ENCODE measurements at regions of chr1 and their contacts with region 1.

Region 1: DNA sequence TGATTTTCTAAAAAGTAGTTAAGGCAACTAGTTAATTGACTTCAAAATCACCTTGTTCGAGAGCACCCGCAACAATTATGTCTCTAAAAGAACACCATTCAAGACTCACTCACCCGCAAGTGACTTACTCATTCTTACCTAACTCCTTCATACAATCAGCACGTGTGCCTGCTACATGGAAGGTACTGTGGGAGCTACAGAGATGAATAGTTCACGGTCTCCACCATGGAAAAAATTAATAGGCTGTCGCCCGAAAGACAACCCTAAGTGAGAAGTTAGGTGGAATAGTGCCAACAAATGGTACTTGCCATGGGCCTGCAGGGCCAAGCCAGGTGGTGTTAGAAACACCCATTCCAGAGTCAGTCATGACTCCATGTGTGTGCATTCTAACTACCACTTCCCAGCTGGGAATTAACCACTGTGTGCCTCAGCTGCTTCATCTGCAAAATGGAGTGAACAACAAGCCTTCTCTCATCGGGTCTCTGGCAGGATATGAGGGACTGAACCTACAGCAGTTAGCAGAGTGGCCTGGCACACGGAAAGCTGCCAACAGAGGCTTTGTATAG is 7.1 kb downstream of the SSBP3 start:
- DNase-seq: no peak
- H3K4me3 Mint-ChIP-seq: peak overlapping the region; percentile 57
- H3K27ac Mint-ChIP-seq: peak overlapping the region; percentile 85
- H3K4me1 Mint-ChIP-seq: peaks cover 62% of the 10 kb centered on the region
- H3K27me3 Mint-ChIP-seq: no peaks in the 10 kb centered on the region

Region 2: DNA sequence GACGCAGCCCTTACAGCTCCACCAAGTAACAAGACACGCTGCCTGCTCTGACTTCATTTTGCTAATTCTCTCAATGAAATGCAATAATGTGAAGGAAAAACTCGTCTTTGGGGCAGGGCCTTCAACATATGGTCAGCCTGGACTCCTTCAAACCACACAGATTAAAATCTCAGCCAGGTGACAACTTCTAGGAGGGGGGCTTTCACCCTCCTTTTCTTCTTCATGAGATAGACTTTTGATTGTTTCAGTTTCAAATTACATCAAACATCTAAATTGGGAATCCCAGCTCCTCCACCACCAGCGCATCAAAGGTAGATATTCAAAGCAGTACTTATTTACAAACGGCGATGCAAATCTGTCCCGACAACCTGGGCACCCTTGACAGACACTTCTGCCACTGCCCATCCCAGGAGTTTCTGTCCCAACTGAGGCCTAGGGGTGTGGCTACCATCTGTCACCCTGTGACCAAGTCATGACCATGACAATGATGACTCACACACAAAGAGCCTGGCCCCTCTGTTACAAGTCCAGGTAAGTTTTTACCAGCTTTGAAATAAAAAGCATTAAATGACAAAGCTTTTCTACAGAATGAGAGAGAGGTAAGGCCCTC is 22.5 kb before region 1 on chr1:
- intact Hi-C with region 1: loop called (anchors 1 kb)
- DNase-seq: peak; percentile 76
- H3K4me3 Mint-ChIP-seq: no peak overlapping the region
- H3K27ac Mint-ChIP-seq: peak overlapping the region; percentile 63
- H3K4me1 Mint-ChIP-seq: peaks cover 70% of the 10 kb centered on the region
- H3K27me3 Mint-ChIP-seq: no peaks in the 10 kb centered on the region

Region 3: GRCh38 chr1:54506594-54506993 is 107.5 kb after region 1 on chr1:
- intact Hi-C with region 1: no loop called
- DNase-seq: no peak
- H3K4me3 Mint-ChIP-seq: no peak overlapping the region
- H3K27ac Mint-ChIP-seq: no peak overlapping the region
- H3K4me1 Mint-ChIP-seq: no peaks in the 10 kb centered on the region
- H3K27me3 Mint-ChIP-seq: peaks cover 12% of the 10 kb centered on the region